Activated CD4-positive, alpha-beta memory T cell treated with anti-CD3 and anti-CD28 coated beads for 36 hours (primary cell): ENCODE measurements at regions of chr1 and their contacts with region 1.

Region 1: GRCh38 chr1:225474986-225475820 is 47.4 kb upstream of the LBR start:
- DNase-seq: peak; percentile 77
- H3K4me3 Mint-ChIP-seq: no peak overlapping the region
- H3K27ac Mint-ChIP-seq: no peak overlapping the region
- H3K4me1 Mint-ChIP-seq: peaks cover 41% of the 10 kb centered on the region
- H3K27me3 Mint-ChIP-seq: no peaks in the 10 kb centered on the region

Region 2: GRCh38 chr1:225460737-225461562 is 14.3 kb before region 1 on chr1:
- CTCF ChIA-PET with region 1: interaction called, 12 read pairs
- POLR2A ChIA-PET with region 1: no interaction called
- intact Hi-C with region 1: no loop called
- DNase-seq: peak; percentile 75
- H3K4me3 Mint-ChIP-seq: no peak overlapping the region
- H3K27ac Mint-ChIP-seq: peak overlapping the region; percentile 23
- H3K4me1 Mint-ChIP-seq: peaks cover 35% of the 10 kb centered on the region
- H3K27me3 Mint-ChIP-seq: no peaks in the 10 kb centered on the region

Region 3: GRCh38 chr1:225493591-225494246 is 18.5 kb after region 1 on chr1:
- CTCF ChIA-PET with region 1: interaction called, 14 read pairs
- POLR2A ChIA-PET with region 1: no interaction called
- intact Hi-C with region 1: no loop called
- DNase-seq: no peak
- H3K4me3 Mint-ChIP-seq: no peak overlapping the region
- H3K27ac Mint-ChIP-seq: no peak overlapping the region
- H3K4me1 Mint-ChIP-seq: peaks cover 3% of the 10 kb centered on the region
- H3K27me3 Mint-ChIP-seq: peaks cover 17% of the 10 kb centered on the region

Region 4: DNA sequence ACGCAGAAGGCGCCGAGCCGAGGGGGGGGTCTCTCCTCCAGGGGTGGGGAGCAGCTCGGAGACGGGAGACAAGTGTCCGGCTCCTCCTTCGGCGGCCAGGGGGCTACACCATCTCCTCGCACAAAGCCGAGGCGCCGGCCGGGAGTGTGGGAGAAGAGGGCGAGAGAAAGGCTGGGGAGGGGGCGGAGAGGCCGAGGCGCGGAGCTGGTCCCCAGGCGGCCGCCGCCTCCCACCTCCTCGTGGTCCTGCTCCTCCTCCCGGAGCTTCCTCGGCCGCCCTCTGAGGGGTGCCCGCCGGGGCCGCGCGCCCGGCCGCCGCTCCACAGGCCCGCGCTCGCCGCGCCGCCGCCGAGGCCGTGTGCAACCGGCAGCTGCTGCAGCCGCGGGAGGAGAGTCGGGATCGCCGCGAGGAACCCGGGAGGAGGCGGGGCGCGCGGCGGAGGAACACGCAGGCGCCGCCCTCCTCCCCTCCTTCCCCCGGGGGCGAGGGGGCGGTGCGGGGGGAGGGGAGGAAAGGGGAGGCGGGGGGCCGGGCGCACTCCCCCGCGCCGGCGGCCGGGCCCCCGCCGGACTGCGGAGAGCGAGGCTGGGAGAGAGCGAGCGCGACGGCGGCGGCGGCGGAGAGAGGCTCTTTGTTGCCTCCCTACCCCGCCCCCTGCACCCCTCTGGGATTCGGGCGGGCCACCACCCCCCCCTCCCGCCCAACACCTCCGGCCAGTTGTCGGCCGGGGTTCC is 177.7 kb after region 1 on chr1 and contains the start of gene ENAH:
- CTCF ChIA-PET with region 1: no interaction called
- POLR2A ChIA-PET with region 1: no interaction called
- intact Hi-C with region 1: loop called (anchors 5 kb)
- DNase-seq: peak; percentile 56
- H3K4me3 Mint-ChIP-seq: peak within 1 kb of the TSS; percentile 82
- H3K27ac Mint-ChIP-seq: no peak within 1 kb of the TSS
- H3K4me1 Mint-ChIP-seq: peaks cover 13% of the 10 kb centered on the region
- H3K27me3 Mint-ChIP-seq: peaks cover 24% of the 10 kb centered on the region
- total RNA-seq, gene ENAH: 0.80 to 0.95 TPM

Region 5: DNA sequence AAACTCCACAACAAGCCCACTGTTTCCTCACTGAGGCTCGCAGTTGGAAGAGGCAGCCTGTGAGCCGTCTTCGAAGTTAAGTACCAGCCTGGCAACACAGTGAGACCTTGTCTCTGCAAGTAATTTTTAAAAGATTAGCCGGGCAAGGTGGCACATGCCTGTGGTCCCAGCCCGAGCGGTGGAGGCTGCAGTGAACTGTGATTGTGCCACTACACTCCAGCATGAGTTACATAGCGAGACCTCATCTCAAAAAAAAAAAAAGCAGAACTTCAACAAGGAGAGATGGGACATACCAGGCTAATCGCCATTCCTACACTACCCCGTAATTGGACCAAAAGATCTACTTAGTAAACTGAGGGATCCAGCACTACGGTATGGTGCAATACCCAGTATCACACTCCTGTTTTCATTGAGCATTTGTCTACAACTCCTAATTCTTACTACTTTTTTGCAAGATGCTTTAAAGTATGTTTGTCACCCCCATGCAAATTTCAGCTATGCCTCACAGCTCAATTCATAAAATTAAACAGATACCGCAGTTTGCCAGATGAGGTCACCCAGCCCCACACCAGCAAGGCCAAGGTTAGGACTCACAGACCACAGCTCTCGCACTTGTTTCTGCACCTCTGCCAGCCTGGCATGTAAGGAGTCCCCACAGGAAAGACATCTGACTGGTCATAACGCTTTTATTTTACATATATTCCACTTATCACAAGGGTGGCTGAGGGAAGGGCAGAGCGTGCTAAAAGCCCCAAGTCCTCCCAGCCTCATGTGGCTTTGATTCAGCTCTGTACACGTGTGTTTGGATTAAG is 502.9 kb after region 1 on chr1:
- CTCF ChIA-PET with region 1: interaction called, 8 read pairs
- POLR2A ChIA-PET with region 1: no interaction called
- intact Hi-C with region 1: loop called (anchors 1 kb)
- DNase-seq: no peak
- H3K4me3 Mint-ChIP-seq: no peak overlapping the region
- H3K27ac Mint-ChIP-seq: no peak overlapping the region
- H3K4me1 Mint-ChIP-seq: peaks cover 7% of the 10 kb centered on the region
- H3K27me3 Mint-ChIP-seq: no peaks in the 10 kb centered on the region